WTC11 (cell line): ENCODE measurements at regions of chr17 and their contacts with region 1.

Region 1: GRCh38 chr17:76458580-76459490 is 5.9 kb upstream of the UBE2O start:
- DNase-seq: peak; percentile 87
- ATAC-seq: peak; percentile 94
- H3K4me3 Mint-ChIP-seq: no peak overlapping the region
- H3K27ac Mint-ChIP-seq: no peak overlapping the region
- H3K4me1 Mint-ChIP-seq: peaks cover 14% of the 10 kb centered on the region
- H3K27me3 Mint-ChIP-seq: peaks cover 2% of the 10 kb centered on the region; the same call in 1 of the 2 replicates
- CTCF ChIP-seq: no peak

Region 2: GRCh38 chr17:76353599-76354316 is 105.1 kb before region 1 on chr17 and contains the start of gene PRPSAP1:
- CTCF ChIA-PET with region 1: interaction called, 11 read pairs
- POLR2A ChIA-PET with region 1: no interaction called
- DNase-seq: peak; percentile 86
- ATAC-seq: peak; percentile 94
- H3K4me3 Mint-ChIP-seq: peak within 1 kb of the TSS; percentile 95
- H3K27ac Mint-ChIP-seq: peak within 1 kb of the TSS; percentile 100
- H3K4me1 Mint-ChIP-seq: peaks cover 27% of the 10 kb centered on the region
- H3K27me3 Mint-ChIP-seq: no peaks in the 10 kb centered on the region
- CTCF ChIP-seq: no peak
- total RNA-seq, gene PRPSAP1: 50.0 to 56.5 TPM (median 52.3 TPM) in 3 replicates

Region 3: DNA sequence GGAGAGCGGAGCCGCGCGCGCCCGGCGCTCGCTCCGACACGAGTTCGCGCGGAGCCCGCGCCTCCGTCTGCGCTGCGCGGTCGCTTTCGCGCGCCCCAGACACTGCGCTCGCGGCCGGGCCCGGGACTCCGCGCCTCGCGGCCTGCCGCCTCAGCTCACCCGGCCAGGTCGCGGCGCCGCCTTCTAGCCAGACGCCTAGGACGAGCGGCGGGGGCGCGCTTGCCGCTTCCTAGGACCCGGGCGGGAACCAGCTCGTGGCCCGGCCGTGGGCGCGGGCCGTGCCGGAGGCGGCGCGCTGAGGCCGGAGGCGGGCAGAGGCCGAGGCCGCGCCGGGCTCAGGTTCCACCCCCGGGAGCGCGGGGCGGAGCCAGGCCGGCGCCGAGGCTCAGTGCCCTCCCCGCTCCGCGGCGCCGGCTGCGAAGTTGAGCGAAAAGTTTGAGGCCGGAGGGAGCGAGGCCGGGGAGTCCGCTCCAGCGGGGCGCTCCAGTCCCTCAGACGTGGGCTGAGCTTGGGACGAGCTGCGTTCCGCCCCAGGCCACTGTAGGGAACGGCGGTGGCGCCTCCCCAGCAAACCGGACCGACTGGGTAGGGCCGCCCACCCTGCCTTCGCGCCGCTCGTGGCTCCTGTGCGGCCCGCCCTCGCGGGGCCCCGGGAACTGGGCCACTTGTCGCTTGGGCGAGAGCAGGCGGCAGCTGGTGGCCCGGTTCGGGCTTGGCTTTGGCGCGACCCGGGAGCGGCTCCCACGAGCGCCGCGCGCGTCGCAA is 74.4 kb before region 1 on chr17 and contains the start of gene SPHK1:
- CTCF ChIA-PET with region 1: interaction called, 19 read pairs
- POLR2A ChIA-PET with region 1: no interaction called
- DNase-seq: peak; percentile 73
- ATAC-seq: peak; percentile 35
- H3K4me3 Mint-ChIP-seq: peak within 1 kb of the TSS; percentile 81
- H3K27ac Mint-ChIP-seq: no peak within 1 kb of the TSS
- H3K4me1 Mint-ChIP-seq: peaks cover 18% of the 10 kb centered on the region
- H3K27me3 Mint-ChIP-seq: peaks cover 49% of the 10 kb centered on the region
- CTCF ChIP-seq: no peak
- total RNA-seq, gene SPHK1: 2.5 to 2.9 TPM (median 2.8 TPM) in 3 replicates

Region 4: DNA sequence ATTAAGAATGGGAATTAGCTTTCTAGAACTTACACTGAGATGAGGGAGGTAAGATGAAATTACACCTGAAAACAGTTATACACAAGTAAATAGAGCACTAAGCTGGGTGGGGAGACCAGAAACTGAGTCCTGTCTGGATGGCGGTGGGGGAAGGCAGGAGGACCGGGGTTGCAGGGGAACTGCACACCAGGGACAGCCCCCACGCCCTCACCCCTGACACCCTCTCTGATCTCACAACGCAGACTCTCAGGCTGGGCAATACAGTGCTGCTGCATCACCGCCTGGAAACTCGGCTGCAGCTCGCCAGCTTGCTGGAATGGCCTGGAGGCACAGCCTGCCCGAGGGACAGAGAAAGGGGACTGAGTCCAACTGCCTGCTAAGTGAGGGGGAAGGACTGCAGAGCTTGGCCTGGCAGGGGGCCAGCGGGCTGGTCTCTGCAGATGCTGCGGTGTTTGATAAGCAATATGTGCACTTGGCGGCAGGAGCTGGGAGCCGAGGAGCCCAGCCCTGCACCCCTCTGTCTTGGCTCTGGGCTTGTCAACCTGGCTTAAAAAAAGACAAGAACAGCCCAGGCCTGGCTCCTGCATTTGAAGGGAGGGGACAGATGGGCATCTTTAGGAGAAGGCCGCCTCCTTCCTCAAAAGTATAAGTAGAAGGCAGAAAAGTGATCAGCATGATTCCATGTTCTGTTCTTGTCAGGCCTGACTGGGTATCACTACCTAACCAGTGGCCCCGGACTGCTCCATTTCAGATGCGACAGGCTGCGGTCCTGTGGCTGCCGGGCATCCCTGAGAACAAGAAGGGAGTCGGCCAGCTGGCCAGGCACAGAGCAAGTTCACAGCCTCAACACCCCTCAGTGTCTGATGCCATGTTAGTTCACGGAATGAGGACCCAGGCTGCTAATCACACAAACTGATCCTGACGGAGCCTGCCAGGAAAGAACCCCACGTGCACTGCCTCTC is 44.2 kb before region 1 on chr17:
- CTCF ChIA-PET with region 1: interaction called, 68 read pairs
- POLR2A ChIA-PET with region 1: no interaction called
- DNase-seq: no peak
- ATAC-seq: peak; percentile 46
- H3K4me3 Mint-ChIP-seq: no peak overlapping the region
- H3K27ac Mint-ChIP-seq: peak overlapping the region; percentile 13
- H3K4me1 Mint-ChIP-seq: peaks cover 27% of the 10 kb centered on the region
- H3K27me3 Mint-ChIP-seq: no peaks in the 10 kb centered on the region
- CTCF ChIP-seq: no peak

Region 5: GRCh38 chr17:76434870-76435269 is 24.0 kb before region 1 on chr17:
- CTCF ChIA-PET with region 1: interaction called, 14 read pairs
- POLR2A ChIA-PET with region 1: no interaction called
- DNase-seq: no peak
- ATAC-seq: no peak
- H3K4me3 Mint-ChIP-seq: no peak overlapping the region
- H3K27ac Mint-ChIP-seq: peak overlapping the region; percentile 77
- H3K4me1 Mint-ChIP-seq: peaks cover 72% of the 10 kb centered on the region
- H3K27me3 Mint-ChIP-seq: no peaks in the 10 kb centered on the region
- CTCF ChIP-seq: no peak

Region 6: DNA sequence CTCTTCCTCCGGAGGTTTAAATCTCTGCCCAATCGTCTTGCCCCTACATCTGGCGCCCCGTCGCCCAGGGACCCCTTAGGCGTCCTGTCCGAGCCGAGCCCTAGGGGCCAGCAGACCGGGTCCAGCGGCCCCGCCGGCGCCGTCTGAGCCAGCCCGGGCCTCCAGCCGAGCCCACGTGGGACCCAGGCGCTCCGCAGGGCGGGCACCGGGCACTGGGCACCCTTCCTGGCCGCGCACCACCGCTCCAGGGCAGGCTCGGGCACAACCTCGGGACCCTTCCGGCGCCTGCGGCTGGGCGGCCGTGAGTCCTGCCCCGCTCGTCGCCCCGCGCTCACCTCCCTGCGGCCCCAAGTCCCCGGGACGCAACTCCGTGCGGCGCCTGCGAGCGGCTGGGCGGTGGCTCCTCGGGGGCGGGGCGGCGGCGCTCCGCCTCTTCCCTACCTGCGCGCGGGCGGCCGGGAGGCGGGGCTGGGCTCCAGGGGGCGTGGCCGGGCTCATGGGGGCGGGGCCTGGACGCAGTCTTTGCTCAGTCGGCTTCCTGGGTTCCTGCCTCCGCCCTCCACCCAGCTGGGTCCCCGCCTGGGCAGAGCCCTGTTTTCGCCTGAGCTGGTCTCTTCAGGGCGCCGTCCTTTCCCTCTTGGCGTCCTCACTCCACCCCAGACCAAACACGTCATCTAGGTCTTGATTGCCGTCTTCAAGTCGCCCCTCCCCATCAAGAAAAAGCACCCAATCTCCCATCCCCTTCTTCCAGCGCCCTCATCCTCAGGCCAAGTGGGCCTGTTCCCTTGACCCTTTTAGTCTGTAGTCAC is 42.4 kb after region 1 on chr17 and contains the start of gene RHBDF2:
- CTCF ChIA-PET with region 1: interaction called, 30 read pairs
- POLR2A ChIA-PET with region 1: no interaction called
- DNase-seq: peak; percentile 95
- ATAC-seq: peak; percentile 82
- H3K4me3 Mint-ChIP-seq: peak within 1 kb of the TSS; percentile 82
- H3K27ac Mint-ChIP-seq: peak within 1 kb of the TSS; percentile 62
- H3K4me1 Mint-ChIP-seq: peaks cover 48% of the 10 kb centered on the region
- H3K27me3 Mint-ChIP-seq: peaks cover 5% of the 10 kb centered on the region
- CTCF ChIP-seq: no peak
- total RNA-seq, gene RHBDF2: 28.6 to 33.0 TPM (median 31.5 TPM) in 3 replicates

Region 7: DNA sequence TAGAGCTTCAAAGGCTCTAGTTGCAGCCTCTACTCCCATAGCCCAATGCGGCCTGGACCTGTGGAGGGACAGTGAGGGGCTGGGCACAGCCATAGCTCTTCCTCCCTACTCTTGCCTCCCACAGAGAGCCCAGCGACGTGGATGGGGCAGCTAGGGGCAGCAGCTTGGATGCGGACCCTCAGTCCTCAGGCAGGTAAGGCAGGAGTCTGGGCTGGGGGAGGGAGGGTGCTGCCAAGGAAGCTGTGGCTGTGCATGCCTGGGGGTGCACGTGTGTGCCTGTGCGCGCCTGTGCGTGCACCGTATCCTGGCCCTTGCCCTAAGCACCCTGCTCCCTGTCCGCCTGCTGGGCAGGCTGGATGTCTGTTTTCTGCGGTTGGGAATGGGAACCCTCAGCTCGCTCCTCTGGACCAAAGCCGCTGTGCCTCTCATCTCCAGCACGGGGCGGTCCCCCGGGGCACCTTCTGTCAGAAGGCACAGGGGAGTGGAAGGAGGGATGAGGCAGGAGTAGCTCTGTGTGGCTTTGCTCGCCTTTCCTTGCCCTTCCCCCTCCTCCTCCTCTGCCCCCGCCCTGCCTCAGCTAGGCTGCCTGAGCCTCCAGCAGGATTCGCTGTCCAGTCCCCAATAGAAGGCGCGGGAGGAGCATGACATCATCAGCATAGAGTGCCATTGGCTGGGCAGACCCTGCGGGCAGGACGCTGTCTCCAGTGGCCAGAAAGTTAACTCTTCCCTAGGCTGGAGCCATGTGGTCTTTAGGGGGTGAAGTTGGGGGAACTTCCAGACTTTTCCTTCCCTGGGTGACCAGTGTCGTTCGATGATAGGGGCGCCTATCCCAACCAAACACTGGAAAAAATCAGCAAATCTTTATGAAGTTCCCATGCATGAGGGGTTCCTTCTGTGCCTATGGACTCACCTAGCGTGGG is 81.8 kb after region 1 on chr17:
- CTCF ChIA-PET with region 1: interaction called, 15 read pairs
- POLR2A ChIA-PET with region 1: no interaction called
- DNase-seq: peak; percentile 95
- ATAC-seq: peak; percentile 91
- H3K4me3 Mint-ChIP-seq: peak overlapping the region; percentile 74
- H3K27ac Mint-ChIP-seq: peak overlapping the region; percentile 80
- H3K4me1 Mint-ChIP-seq: peaks cover 40% of the 10 kb centered on the region
- H3K27me3 Mint-ChIP-seq: peaks cover 43% of the 10 kb centered on the region
- CTCF ChIP-seq: no peak